Thyroid gland (tissue), 4 donors: ENCODE measurements at regions of chr17 and their contacts with region 1.

Region 1: GRCh38 chr17:63611354-63611753 is 10.7 kb downstream of the TACO1 start:
- DNase-seq: no peak
- H3K4me3 ChIP-seq: no peak overlapping the region
- H3K27ac ChIP-seq: no peak overlapping the region
- H3K4me1 ChIP-seq: no peaks in the 10 kb centered on the region
- H3K27me3 ChIP-seq: no peaks in the 10 kb centered on the region
- CTCF ChIP-seq: no peak
- POLR2A ChIP-seq: no peak

Region 2: DNA sequence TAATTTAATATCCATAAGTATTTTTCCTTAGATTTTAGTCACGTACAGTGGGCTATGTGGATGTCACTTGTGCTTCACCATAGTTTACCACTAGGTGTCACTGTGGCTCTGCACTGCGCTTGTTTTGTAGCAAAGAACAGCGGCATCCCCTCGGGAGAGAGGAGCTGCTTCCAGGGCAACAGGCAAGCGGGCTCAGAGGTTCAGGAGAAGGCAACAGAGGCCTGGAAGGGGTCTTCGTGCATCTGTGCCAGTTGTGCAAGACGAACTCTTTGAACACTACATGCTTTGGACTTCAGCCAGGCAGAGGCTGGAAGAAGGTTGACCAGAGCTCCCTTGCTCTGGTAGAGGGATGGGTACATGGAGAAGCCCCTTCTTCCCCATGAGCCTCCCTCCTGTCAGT is 185.9 kb before region 1 on chr17:
- intact Hi-C with region 1: loop called (anchors 2 kb)
- DNase-seq: peak; percentile 71 to 73
- H3K4me3 ChIP-seq: no peak overlapping the region
- H3K27ac ChIP-seq: no peak overlapping the region
- H3K4me1 ChIP-seq: no peaks in the 10 kb centered on the region
- H3K27me3 ChIP-seq: no peaks in the 10 kb centered on the region
- CTCF ChIP-seq: peak; percentile 68 to 96 (median 92)
- POLR2A ChIP-seq: no peak

Region 3: GRCh38 chr17:63798572-63799106 is 187.3 kb after region 1 on chr17:
- intact Hi-C with region 1: no loop called
- DNase-seq: no peak
- H3K4me3 ChIP-seq: no peak overlapping the region
- H3K27ac ChIP-seq: no peak overlapping the region
- H3K4me1 ChIP-seq: no peaks in the 10 kb centered on the region
- H3K27me3 ChIP-seq: no peaks in the 10 kb centered on the region
- CTCF ChIP-seq: no peak
- POLR2A ChIP-seq: no peak

Region 4: DNA sequence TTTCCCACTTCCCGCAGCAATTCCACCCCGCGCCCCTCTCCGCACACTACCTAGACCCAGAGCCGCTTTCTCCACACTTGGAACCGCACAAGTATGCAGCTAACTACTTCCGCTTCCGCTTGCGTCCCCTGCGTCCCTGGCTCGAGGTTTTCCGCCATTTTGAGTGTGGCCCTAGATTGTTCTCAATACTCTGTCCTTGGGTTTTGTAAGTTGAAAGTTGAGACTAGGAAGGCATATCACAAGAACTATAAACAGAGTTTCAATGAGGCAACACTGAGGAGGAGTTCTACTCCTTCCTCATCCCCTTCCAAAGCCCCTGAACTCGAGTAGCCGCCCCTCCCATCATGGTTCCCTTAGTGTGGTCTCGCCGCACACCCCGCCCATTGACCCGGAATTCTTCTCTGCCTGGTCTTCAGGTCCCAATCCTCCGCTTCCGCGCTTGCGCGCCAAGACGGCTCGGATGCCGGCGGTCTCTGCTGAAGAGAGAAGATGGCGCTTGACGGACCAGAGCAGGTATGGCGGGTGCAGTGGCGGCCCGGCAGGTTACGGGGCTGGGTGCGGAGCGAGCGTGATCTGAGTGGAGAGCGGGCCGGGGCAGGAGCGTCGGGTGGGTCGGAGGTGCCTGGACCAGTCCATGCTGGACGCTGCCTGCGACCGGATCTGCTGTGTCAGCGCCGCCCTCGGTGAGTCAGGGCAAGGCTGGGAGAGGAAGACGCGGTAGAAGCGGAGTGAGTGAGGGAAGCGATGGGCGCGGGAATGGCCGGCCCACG is 215.8 kb after region 1 on chr17 and contains the starts of genes FTSJ3 and PSMC5:
- intact Hi-C with region 1: loop called (anchors 10 kb)
- DNase-seq: peak; percentile 97
- H3K4me3 ChIP-seq: peak within 1 kb of the TSS; percentile 28 to 48 (median 28)
- H3K27ac ChIP-seq: peak within 1 kb of the TSS; percentile 60 to 93 (median 90)
- H3K4me1 ChIP-seq: peaks cover 9 to 21% of the 10 kb centered on the region in 2 donors
- H3K27me3 ChIP-seq: no peaks in the 10 kb centered on the region
- CTCF ChIP-seq: peak in 4 of 6 experiments; percentile 50 to 61 (median 56)
- POLR2A ChIP-seq: peak; percentile 50 to 82
- total RNA-seq, gene FTSJ3: 37.8 to 64.7 (median 47.2) TPM
- total RNA-seq, gene PSMC5: 79.1 to 98.3 (median 86.4) TPM

Region 5: GRCh38 chr17:63974594-63975192 is 363.3 kb after region 1 on chr17:
- intact Hi-C with region 1: no loop called
- DNase-seq: peak; percentile 64 to 67
- H3K4me3 ChIP-seq: no peak overlapping the region
- H3K27ac ChIP-seq: peak overlapping the region; percentile 61 to 84 (median 65)
- H3K4me1 ChIP-seq: peaks cover 16 to 65% of the 10 kb centered on the region in 2 donors
- H3K27me3 ChIP-seq: no peaks in the 10 kb centered on the region
- CTCF ChIP-seq: no peak
- POLR2A ChIP-seq: no peak